Activated CD8-positive, alpha-beta T cell treated with anti-CD3 and anti-CD28 coated beads, Interleukin-2, amount 10 ng/mL, durations not matched to agents 7 days and 5 days (primary cell): ENCODE measurements at regions of chr2 and their contacts with region 1.

Region 1: DNA sequence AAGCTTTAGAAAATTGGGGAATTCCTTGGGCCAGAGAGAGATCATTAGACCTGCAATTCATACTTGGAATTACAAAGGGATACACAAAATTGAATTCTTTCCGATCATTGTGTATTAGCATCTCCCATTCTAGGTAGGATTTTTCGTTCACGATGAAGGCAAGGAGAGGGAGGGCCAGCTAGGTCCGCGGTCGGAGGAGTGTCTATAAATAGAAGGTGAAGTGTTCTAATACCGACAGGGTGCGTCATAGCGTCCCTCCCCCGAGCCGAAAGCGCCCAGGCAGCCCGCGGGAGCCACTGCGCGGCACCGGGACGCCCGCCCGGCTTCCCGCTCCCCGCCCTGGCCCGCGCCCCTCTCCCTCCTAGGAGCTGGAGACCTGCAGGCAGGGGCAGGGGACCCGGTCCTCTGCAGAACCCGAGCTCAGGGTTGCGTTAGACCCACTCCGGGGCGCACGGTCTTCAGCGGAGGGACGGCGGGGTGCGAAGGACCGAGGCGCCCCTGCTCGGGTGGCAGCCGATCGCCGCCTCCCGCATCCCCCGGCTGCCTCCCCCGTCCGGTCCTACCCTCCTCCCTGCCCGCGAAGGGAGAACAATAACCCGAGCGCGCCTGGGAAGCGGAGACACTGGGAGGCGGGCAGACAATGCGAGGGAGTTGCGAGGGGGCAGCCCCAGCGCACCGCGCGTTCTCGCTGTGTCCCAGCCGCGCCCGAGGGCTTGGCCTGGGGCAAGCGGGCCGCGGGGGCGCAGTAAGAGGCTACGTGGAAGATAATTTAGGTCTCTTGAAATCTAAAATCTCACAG is 114.2 kb upstream of the SERTAD2 start:
- DNase-seq: peak; percentile 89
- ATAC-seq: peak; percentile 87
- H3K4me3 Mint-ChIP-seq: peak overlapping the region; percentile 81
- H3K27ac Mint-ChIP-seq: peak overlapping the region; percentile 92
- H3K4me1 Mint-ChIP-seq: peaks cover 34% of the 10 kb centered on the region
- H3K27me3 Mint-ChIP-seq: peaks cover 4% of the 10 kb centered on the region

Region 2: DNA sequence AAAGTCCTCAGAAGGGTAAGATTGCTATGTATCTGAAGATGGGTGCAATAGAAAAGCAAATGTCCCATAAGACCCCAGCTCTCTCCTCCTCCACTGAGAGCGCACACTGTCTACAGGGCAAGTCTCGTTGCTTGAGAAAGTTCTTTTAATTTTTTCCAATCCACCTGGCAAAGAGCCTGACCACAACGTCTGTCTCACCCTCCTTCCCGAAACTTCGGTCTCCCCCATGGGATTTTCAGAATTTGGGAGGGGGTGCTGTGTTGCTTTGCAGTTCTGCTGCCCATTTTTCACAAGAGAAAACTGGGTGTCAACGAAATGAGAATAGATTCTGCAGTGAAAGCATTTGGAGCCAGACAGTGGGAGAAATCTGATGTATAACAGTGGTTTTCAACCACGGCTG is 154.6 kb before region 1 on chr2:
- CTCF ChIA-PET with region 1: no interaction called
- POLR2A ChIA-PET with region 1: no interaction called
- DNase-seq: no peak
- ATAC-seq: no peak
- H3K4me3 Mint-ChIP-seq: no peak overlapping the region
- H3K27ac Mint-ChIP-seq: no peak overlapping the region
- H3K4me1 Mint-ChIP-seq: peaks cover 4% of the 10 kb centered on the region
- H3K27me3 Mint-ChIP-seq: peaks cover 19% of the 10 kb centered on the region

Region 3: DNA sequence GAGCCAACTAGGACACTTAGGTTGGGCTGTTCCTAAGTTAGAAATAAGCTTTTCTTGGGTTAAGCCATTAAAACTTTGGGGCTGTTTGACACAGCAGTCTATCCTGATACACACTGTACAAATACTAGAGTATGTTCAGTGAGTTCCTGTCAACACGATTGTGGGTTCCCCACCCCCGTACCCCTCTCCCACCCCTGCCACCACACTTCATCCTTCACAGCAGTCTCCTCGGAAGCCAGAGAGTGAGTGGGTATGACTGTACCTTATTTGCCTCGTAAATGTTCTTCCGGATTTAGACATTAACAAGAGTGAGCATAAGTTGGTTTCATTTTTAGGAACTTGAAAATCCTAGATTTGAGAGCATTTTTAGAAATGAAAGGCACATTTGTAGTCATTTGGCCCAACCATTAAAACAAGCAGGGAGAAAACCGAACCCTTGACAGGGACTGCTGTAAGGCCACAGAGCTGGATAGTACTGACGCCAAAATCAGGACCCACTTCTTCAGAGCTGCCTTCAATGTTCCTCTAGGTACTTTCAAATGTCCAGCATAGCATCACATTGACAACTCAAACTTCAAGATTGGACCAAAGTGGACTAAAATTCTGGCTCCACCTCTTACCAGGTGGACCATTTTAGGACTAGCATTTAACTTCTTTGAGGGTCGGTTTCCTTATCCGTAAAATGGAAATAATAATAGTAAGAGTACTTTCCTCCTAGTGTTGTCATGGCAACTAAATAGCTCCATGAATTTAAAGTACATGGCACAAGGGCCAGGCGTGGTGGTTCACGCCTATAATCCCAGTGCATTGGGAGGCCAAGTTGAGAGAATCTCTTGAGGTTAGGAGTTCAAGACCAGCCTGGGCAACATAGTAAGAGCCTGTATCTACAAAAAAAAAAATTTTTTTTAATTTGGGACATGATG is 52.2 kb after region 1 on chr2:
- CTCF ChIA-PET with region 1: interaction called, 4 read pairs
- POLR2A ChIA-PET with region 1: interaction called, 10 read pairs
- DNase-seq: peak; percentile 67
- ATAC-seq: peak; percentile 92
- H3K4me3 Mint-ChIP-seq: peak overlapping the region; percentile 61
- H3K27ac Mint-ChIP-seq: peak overlapping the region; percentile 90
- H3K4me1 Mint-ChIP-seq: peaks cover 35% of the 10 kb centered on the region
- H3K27me3 Mint-ChIP-seq: no peaks in the 10 kb centered on the region